ENCODE measurements at regions of chr14 and their contacts with region 1.

Region 1: GRCh38 chr14:56810147-56810719 is at the start of gene OTX2:
- DNase-seq: no peak
- total RNA-seq, gene OTX2: not detected

Region 2: DNA sequence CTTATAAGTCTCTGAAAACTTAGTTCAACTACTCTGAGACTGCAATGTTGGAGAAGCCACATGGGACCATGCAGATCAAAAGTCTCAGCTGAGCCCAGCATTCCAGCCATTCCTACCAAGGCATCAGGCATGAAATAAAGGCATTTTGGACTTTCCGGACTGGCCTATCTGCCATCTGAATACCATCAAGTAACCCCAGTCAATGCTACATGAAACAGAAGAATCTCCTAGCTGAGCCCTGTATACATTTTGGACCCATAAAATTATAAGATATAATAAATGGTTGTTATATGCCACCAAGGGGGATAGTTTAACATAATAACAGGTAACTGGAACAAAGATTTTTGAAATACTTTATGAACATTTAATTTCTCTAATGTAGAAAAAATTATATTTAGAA is 239.9 kb before region 1 on chr14:
- intact Hi-C with region 1: loop called in 1 of 2 experiments (anchors 5 kb)
- DNase-seq: no peak

Region 3: DNA sequence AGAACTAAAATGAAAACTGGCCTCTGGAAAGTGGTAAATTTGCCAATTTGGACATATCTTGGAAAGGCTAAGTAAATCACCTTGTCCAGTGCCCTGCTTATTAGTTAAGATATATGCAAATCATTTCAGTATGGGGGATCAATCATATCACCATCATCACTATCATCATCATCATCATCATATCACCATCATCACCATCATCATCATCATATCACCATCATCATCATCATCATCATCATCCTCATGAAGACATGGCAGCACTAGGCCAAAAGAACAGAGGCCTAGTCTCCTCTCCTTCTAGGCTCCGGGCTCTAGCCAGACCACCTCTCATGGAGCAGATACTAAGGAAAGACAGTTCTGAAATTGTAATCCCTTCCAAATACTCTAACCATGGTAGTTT is 20.3 kb before region 1 on chr14:
- intact Hi-C with region 1: loop called in 1 of 2 experiments (anchors 1 kb)
- DNase-seq: no peak

Region 4: GRCh38 chr14:56846970-56847922 is 37.0 kb after region 1 on chr14:
- intact Hi-C with region 1: no loop called
- DNase-seq: no peak

Measured in posterior vena cava (tissue), 2 donors.